ENCODE measurements at regions of chr4 and their contacts with region 1.

Region 1: GRCh38 chr4:24408640-24409039 is 175.7 kb downstream of the DHX15 start:
- DNase-seq: no peak
- H3K4me3 Mint-ChIP-seq: no peak overlapping the region
- H3K27ac Mint-ChIP-seq: no peak overlapping the region
- H3K4me1 Mint-ChIP-seq: no peaks in the 10 kb centered on the region
- H3K27me3 Mint-ChIP-seq: peaks cover 4% of the 10 kb centered on the region

Region 2: GRCh38 chr4:24419181-24420034 is 10.8 kb after region 1 on chr4:
- CTCF ChIA-PET with region 1: interaction called, 10 read pairs
- POLR2A ChIA-PET with region 1: no interaction called
- DNase-seq: peak; percentile 66
- H3K4me3 Mint-ChIP-seq: no peak overlapping the region
- H3K27ac Mint-ChIP-seq: no peak overlapping the region
- H3K4me1 Mint-ChIP-seq: no peaks in the 10 kb centered on the region
- H3K27me3 Mint-ChIP-seq: peaks cover 3% of the 10 kb centered on the region

Region 3: DNA sequence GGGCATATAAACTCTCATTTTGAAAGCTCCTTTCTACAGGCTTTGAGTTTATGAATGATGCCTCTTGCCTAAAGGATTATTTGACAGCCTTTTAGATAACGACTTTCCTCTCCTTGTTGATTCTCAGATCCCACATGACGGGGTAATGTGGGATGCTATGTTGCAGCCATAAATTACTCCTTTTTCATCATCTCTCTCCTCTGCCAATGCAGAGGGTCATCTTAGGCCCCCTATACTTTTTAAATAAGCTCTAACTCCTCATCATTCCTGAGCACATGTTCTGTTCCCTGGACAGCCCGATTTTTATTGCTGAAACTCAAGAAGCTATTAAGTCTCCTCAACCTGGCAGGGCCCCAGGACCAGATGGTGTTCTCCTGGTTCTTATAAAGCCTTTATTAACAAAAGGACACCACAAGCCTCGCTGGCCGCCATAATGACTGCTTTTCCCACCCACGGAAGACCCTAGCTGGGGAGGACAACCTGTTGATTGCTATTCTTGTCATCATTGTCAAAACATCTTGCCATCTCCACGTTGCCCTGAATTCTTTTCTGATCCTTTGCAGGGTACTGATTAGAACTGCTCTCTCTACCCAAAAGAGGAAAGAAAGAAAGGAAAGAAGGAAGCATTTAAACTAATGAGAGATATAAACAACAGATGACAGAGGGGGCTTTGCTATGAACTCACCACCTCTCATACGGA is 25.0 kb after region 1 on chr4:
- CTCF ChIA-PET with region 1: no interaction called
- POLR2A ChIA-PET with region 1: no interaction called
- DNase-seq: no peak
- H3K4me3 Mint-ChIP-seq: no peak overlapping the region
- H3K27ac Mint-ChIP-seq: no peak overlapping the region
- H3K4me1 Mint-ChIP-seq: no peaks in the 10 kb centered on the region
- H3K27me3 Mint-ChIP-seq: no peaks in the 10 kb centered on the region

Measured in activated CD4-positive, alpha-beta memory T cell treated with anti-CD3 and anti-CD28 coated beads, Interleukin-2, amount 10 ng/mL, durations not matched to agents 7 days and 5 days (primary cell).